GM10248 (cell line): ENCODE measurements at regions of chr2 and their contacts with region 1.

Region 1: DNA sequence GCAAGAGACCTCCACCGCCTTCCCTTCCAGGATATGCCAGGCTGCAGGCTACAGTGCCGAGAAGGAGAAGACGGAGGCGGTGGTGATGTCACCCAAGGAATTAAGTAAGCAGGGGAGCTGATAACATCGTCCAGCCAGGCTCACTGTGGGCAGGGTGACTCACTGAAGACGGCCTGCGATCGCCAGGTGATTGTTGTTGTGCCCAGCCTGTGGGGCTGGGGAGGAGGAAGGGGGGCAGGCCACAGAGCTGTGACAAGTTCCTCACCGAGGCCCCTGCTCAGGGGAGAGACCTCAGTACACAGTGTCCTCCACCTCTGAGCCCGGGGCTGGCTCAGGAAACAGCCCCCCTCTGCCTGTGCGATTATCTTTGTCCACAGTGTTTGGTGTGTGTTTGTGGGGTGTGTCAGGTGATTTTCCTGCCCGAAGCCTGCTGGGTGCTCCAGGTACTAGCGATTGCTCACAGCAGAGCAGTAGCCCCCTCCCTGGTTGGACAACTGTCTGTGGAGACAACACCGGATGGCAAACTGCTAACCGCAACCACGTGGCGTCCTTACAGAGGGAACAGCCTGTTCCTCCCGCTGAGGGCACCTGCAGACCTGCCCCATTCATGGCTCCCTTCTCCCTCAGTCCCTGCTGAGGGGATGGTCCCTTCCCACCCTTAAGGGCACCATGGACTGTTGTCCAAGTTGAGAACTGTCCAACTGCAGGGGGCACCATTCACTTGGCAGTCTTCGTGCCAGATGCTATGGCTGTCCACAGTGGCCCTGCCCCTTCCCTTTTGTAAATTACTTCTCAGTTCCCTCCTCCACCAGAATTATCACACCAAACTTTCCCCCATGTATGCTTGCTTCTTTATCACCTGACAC is 95.1 kb downstream of the ZFP36L2 start:
- DNase-seq: peak; percentile 78
- CTCF ChIP-seq: peak; percentile 48

Region 2: DNA sequence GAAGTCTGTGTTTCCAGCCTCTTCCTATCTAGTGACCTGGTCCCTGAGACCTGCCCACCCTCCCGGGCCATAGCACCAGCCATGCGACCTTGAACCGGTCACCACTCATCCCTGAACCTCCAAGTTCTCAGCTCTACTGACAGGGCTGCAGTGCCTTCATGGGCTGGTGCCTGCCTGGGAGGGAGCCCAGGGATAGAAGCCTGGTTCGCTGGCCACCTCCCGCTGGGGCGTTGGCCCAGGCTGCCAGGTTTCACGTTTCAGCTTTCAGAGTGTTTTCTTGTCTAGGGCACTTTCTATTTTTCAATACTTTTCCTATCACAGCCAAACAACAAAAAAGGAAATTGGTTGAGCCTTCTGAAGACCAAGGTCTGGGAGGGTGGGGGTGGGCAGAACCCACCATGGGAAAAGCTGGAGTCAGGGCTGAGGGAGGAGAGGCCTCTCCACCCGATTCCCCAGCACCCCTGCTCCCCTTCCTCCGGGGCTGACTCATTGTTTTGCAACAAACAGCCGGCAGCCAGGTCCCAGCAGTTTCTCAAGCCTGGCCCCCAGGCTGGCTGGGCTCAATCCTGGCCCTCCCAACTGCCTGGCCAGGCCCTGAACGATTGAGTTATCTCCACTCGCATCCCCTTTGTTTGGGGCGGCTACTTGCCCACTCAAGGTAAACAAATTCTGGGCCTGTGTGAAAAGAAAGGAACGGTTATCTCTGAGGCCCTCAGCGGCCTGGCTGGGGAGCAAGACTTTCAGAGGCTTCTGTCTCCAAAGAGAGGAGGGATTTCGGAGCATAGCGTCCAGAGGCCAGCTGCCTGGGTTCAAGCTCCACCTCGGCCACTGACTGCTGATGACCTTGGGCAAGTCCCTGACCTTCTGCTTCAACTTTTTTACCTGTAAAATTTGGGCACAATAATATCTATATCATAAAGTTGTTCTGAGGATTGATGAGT is 47.6 kb after region 1 on chr2:
- CTCF ChIA-PET with region 1: interaction called, 12 read pairs
- POLR2A ChIA-PET with region 1: no interaction called
- DNase-seq: no peak
- CTCF ChIP-seq: no peak

Region 3: GRCh38 chr2:43312755-43313641 is 181.7 kb after region 1 on chr2:
- CTCF ChIA-PET with region 1: no interaction called
- POLR2A ChIA-PET with region 1: no interaction called
- DNase-seq: no peak
- CTCF ChIP-seq: no peak

Region 4: GRCh38 chr2:43737097-43737854 is 606.0 kb after region 1 on chr2:
- CTCF ChIA-PET with region 1: no interaction called
- POLR2A ChIA-PET with region 1: no interaction called
- DNase-seq: no peak
- CTCF ChIP-seq: no peak